BJ (cell line): ENCODE measurements at regions of chr20 and their contacts with region 1.

Region 1: DNA sequence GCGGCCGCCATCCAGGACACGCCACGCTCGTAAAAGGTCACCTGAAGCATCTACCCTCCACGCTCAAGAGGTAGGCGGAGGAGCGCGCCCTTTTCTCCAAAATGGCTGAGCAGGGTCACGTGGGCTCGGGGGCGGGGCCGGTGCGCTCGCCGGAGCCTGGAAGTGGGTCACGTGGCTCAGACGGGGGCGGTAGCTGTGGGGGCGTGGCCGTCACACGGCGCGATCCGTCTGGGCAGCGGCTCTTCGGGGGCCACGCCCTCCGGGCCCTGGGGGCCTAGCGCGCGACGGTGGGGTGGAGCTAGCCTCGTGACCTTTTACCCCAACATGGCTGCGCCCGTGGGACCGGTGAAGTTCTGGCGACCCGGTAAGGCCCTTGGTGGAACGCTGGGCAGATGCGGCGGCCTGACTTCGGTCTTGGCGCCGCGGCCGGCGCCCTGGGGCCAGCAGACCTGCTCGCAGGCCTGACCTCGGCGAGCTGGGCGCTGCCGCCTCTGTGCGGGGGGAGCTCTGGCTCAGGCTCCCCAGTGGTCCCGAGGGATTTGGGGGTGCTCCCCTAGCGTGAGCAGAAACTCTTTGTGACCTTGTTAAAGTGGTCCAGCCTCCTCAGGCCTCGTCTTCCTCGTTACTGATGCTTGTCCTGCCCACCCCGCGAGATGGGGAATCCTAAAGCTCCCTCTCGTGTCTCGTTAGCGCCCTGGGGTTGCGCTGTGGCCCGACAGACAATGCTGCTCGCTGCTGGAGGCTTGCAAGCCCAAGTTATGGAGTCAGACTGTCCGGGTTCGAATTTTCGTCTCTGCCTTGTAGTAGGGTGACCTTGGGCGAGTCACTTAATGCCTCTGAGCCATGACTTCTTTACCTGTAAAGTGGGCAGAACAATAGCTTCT is at the start of gene DHX35:
- DNase-seq: peak; percentile 73
- H3K4me3 ChIP-seq: peak within 1 kb of the TSS; percentile 87
- H3K27me3 ChIP-seq: no peaks in the 10 kb centered on the region
- CTCF ChIP-seq: peak; percentile 49
- polyA plus RNA-seq, gene DHX35: 12.1 and 14.5 TPM in 2 replicates

Region 2: DNA sequence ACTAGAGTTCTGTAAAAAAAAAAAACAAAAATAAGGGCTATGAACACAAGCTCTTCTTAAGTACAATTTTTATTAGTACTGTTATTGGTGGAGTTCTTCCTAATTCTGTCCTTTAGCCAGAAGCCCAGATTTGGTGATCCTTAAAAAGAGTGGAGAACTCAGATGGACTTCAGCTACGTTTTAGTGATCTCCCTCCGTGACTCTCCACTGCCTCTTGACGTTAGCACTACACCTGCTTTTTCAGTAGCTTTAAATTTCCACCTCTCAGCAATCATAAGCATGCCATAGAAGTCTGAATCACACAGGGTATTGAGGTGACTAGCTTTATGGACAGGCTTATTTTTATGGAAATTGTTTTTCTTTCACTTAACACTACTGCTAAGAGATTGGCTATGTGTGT is 17.6 kb after region 1 on chr20:
- CTCF ChIA-PET with region 1: interaction called, 3 read pairs
- POLR2A ChIA-PET with region 1: interaction called, 17 read pairs
- DNase-seq: no peak
- H3K4me3 ChIP-seq: no peak overlapping the region
- H3K27me3 ChIP-seq: no peaks in the 10 kb centered on the region
- CTCF ChIP-seq: no peak